SK-N-SH (cell line): ENCODE measurements at regions of chr1 and their contacts with region 1.

Region 1: GRCh38 chr1:5745776-5746610 is 246.2 kb downstream of the NPHP4 start:
- DNase-seq: peak; percentile 92
- H3K4me3 ChIP-seq: no peak overlapping the region; a peak in 1 of 4 replicates
- H3K27ac ChIP-seq: no peak overlapping the region; a peak in 1 of 4 replicates
- H3K4me1 ChIP-seq: peaks cover 0 to 25% of the 10 kb centered on the region in 2 experiments; a peak in 1 of 4 replicates
- H3K27me3 ChIP-seq: no peaks in the 10 kb centered on the region
- CTCF ChIP-seq: peak; percentile 41
- EP300 ChIP-seq: no peak
- RAD21 ChIP-seq: peak; percentile 91

Region 2: DNA sequence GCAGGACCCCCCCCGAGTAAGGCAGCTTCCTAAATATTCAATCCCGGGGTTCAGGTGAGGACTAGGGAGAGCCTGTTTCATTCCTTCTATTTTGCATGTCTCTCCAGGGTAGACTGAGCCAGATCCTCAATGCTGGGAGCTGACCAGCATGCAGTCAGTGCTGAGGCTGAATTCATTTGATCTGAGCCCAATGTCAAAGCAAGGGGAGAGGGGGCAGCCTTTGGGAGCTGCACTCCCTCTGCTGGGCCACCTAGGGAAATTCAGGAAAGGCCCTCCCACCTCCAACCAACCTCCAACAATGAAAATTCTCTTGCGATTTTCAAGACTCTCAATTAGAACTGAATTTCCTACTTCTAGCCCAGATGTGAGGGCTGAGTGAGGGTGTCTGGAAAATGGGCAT is 125.0 kb before region 1 on chr1:
- CTCF ChIA-PET with region 1: interaction called, 11 read pairs
- POLR2A ChIA-PET with region 1: no interaction called
- DNase-seq: peak; percentile 83
- H3K4me3 ChIP-seq: no peak overlapping the region
- H3K27ac ChIP-seq: no peak overlapping the region
- H3K4me1 ChIP-seq: peaks cover 0 to 8% of the 10 kb centered on the region in 2 experiments; a peak in 1 of 4 replicates
- H3K27me3 ChIP-seq: no peaks in the 10 kb centered on the region
- CTCF ChIP-seq: no peak
- EP300 ChIP-seq: no peak
- RAD21 ChIP-seq: peak; percentile 80

Region 3: DNA sequence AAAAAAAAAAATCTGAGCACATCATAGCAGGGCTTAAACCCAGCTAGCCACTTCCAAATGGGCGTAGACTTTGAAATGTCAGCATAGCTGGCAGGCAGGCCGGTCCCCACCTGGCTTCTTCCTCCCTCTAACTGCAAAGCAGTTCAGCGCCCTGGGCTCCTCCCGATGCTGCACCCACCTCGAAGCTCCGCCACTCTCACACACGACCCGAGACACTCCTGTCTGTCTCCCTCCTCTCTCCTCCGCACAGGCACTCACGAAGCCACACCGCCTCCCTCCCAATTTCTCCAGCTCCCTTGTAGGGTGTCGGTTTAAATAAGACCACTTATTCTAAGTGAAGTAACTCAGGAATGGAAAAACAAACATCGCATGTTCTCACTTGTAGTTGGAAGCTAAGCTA is 55.1 kb before region 1 on chr1:
- CTCF ChIA-PET with region 1: interaction called, 22 read pairs
- POLR2A ChIA-PET with region 1: no interaction called
- DNase-seq: no peak
- H3K4me3 ChIP-seq: no peak overlapping the region
- H3K27ac ChIP-seq: no peak overlapping the region
- H3K4me1 ChIP-seq: peaks cover 0 to 17% of the 10 kb centered on the region in 2 experiments; a peak in 1 of 4 replicates
- H3K27me3 ChIP-seq: no peaks in the 10 kb centered on the region
- CTCF ChIP-seq: no peak
- EP300 ChIP-seq: no peak
- RAD21 ChIP-seq: no peak

Region 4: DNA sequence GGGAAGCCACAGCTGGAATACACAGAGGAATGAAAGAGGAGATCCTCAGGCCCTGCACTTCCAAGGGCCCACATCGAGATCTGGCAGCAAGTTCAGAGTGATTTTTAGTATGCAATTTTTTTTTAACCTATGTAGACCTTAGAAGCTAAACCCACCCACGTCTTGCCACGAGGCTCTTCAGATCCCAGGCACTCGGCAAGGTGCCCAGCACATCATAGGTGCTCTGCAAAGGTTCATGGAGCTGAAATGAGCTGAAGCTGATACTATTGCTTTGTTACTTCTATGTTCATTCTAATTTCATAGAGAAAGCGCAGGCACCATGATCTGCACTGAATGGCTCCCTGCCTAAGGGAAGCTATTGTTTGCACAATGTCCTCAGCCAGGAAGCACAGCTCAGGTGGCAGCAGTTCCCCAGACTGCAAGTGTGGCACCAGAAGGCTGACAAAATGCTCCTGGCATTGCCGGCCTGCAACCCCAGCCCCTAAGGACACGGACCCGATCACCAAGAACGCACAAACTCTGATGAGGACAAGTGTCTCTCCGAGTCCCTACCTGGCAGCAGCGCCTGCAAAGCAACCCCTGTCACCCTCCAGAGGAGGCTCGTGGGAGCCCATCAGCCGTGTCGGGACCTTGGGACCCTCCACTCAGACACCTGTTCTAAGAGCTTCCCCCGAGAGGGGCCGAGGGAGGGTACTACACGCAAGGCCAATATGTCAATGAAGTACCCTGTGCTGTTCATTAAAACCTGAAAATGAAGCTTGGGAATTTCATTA is 17.9 kb before region 1 on chr1:
- CTCF ChIA-PET with region 1: interaction called, 42 read pairs
- POLR2A ChIA-PET with region 1: no interaction called
- DNase-seq: no peak
- H3K4me3 ChIP-seq: no peak overlapping the region
- H3K27ac ChIP-seq: no peak overlapping the region
- H3K4me1 ChIP-seq: peaks cover 0 to 32% of the 10 kb centered on the region in 2 experiments; a peak in 1 of 4 replicates
- H3K27me3 ChIP-seq: no peaks in the 10 kb centered on the region
- CTCF ChIP-seq: no peak
- EP300 ChIP-seq: no peak
- RAD21 ChIP-seq: no peak

Region 5: GRCh38 chr1:5770981-5771765 is 25.2 kb after region 1 on chr1:
- CTCF ChIA-PET with region 1: interaction called, 61 read pairs
- POLR2A ChIA-PET with region 1: no interaction called
- DNase-seq: peak; percentile 90
- H3K4me3 ChIP-seq: peak overlapping the region in 1 of 2 experiments; percentile 9; a peak in 1 of 4 replicates
- H3K27ac ChIP-seq: peak overlapping the region in 1 of 2 experiments; percentile 96; a peak in 2 of 4 replicates
- H3K4me1 ChIP-seq: peaks cover 0 to 43% of the 10 kb centered on the region in 2 experiments; a peak in 1 of 4 replicates
- H3K27me3 ChIP-seq: no peaks in the 10 kb centered on the region
- CTCF ChIP-seq: no peak
- EP300 ChIP-seq: peak in 1 of 2 experiments; percentile 88; a peak in 2 of 4 replicates
- RAD21 ChIP-seq: 0 out of 2 replicates have a peak, but pooled peaks have one; percentile 3

Region 6: DNA sequence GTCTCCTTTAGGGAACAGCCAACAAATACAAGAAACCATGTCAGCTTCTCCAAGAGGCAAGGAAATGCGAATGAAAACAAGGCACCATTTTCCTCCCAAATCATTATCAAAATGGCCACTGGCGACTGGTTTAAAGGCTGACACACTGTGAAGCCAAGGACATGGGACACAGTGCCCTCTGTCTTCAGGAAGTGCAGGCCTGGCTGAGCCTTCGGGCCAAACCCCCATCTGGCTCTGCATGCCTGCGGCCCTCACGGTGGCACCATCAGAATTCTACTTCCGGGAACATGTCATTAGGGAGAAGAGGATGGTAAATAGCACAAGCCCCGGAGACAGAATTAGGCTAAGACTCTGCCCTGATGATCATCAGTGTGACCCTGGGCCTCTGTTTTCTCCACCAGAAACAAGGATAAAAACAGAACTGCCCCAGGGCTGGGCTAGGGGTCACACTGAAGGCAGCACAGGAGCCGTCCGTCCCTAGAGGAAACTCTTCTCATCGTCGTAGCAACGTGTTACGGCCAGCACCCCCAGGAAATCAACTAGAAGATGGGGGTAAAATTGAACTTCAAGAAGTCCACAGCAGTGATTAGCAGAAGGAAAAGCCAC is 142.7 kb after region 1 on chr1:
- CTCF ChIA-PET with region 1: no interaction called
- POLR2A ChIA-PET with region 1: no interaction called
- DNase-seq: peak; percentile 66
- H3K4me3 ChIP-seq: no peak overlapping the region
- H3K27ac ChIP-seq: no peak overlapping the region; a peak in 1 of 4 replicates
- H3K4me1 ChIP-seq: peaks cover 0 to 50% of the 10 kb centered on the region in 2 experiments; a peak in 1 of 4 replicates
- H3K27me3 ChIP-seq: no peaks in the 10 kb centered on the region
- CTCF ChIP-seq: no peak
- EP300 ChIP-seq: no peak
- RAD21 ChIP-seq: peak; percentile 40

Region 7: GRCh38 chr1:5967351-5968160 is 221.6 kb after region 1 on chr1:
- CTCF ChIA-PET with region 1: interaction called, 10 read pairs
- POLR2A ChIA-PET with region 1: no interaction called
- DNase-seq: peak; percentile 53
- H3K4me3 ChIP-seq: no peak overlapping the region
- H3K27ac ChIP-seq: peak overlapping the region in 1 of 2 experiments; percentile 74; a peak in 2 of 4 replicates
- H3K4me1 ChIP-seq: peaks cover 0 to 51% of the 10 kb centered on the region in 2 experiments; a peak in 2 of 4 replicates
- H3K27me3 ChIP-seq: no peaks in the 10 kb centered on the region
- CTCF ChIP-seq: no peak
- EP300 ChIP-seq: no peak
- RAD21 ChIP-seq: no peak

Region 8: DNA sequence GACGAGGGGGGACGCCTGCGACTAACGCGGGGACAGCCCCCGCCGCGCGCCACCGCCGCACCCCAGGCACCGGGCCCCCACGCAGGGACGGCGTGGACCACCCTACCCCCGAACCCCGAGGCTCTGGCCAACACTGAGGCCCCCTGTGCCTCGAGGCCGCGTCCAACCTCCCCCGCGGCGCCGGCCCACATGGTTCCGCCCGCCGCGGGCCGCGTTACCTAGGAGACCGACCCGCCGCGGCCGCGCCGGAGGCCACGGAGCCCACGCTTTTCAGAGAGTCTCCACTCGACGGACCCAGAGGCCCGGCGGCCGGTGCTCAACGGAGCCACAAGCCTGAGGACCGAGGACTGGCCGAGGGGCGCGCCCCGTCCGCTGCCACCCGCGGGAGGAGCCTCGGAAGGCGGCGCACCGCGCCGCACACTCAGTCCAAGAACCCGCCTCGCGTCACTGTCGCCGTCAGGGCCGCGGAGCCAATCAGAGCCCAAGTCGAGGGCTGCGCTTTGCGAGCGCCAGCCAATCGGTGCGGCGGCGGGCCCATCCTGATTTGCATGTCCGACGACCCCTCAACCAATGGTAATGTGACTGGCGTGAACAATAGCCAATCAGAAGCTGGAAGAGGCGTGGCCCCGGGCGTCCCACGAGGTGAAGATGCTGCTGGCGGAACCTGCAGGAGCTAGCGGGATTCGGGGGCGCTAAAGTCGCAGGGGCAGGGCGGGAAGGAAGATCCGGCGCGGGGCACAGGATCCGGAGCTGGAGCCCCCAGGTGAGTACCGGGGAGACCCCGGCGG is 246.2 kb after region 1 on chr1 and contains the start of gene NPHP4:
- CTCF ChIA-PET with region 1: no interaction called
- POLR2A ChIA-PET with region 1: no interaction called
- DNase-seq: peak; percentile 99
- H3K4me3 ChIP-seq: peak within 1 kb of the TSS; percentile 75 to 88
- H3K27ac ChIP-seq: peak within 1 kb of the TSS; percentile 83 to 88
- H3K4me1 ChIP-seq: peaks cover 0 to 20% of the 10 kb centered on the region in 2 experiments; a peak in 1 of 4 replicates
- H3K27me3 ChIP-seq: no peaks in the 10 kb centered on the region
- CTCF ChIP-seq: peak; percentile 9; the same call in 1 of the 2 replicates
- EP300 ChIP-seq: peak; percentile 15 to 20; a peak in 1 of 4 replicates
- RAD21 ChIP-seq: no peak
- polyA plus RNA-seq, gene NPHP4: 4.6 and 7.0 TPM in 2 replicates

Region 9: GRCh38 chr1:6141592-6141991 is 395.6 kb after region 1 on chr1:
- CTCF ChIA-PET with region 1: no interaction called
- POLR2A ChIA-PET with region 1: no interaction called
- DNase-seq: no peak
- H3K4me3 ChIP-seq: no peak overlapping the region
- H3K27ac ChIP-seq: no peak overlapping the region
- H3K4me1 ChIP-seq: no peaks in the 10 kb centered on the region
- H3K27me3 ChIP-seq: no peaks in the 10 kb centered on the region
- CTCF ChIP-seq: no peak
- EP300 ChIP-seq: no peak
- RAD21 ChIP-seq: no peak